MCF 10A (cell line): ENCODE measurements at regions of chr10 and their contacts with region 1.

Region 1: GRCh38 chr10:94630017-94630688 is 53.4 kb upstream of the CYP2C18 start:
- DNase-seq: peak; percentile 49
- H3K4me3 Mint-ChIP-seq: no peak overlapping the region
- H3K27ac Mint-ChIP-seq: no peak overlapping the region
- H3K4me1 Mint-ChIP-seq: no peaks in the 10 kb centered on the region
- H3K27me3 Mint-ChIP-seq: no peaks in the 10 kb centered on the region
- CTCF ChIP-seq: peak; percentile 51

Region 2: GRCh38 chr10:94963901-94964300 is 333.7 kb after region 1 on chr10:
- CTCF ChIA-PET with region 1: interaction called, 7 read pairs
- POLR2A ChIA-PET with region 1: no interaction called
- intact Hi-C with region 1: loop called (anchors 1 kb)
- DNase-seq: peak; percentile 51
- H3K4me3 Mint-ChIP-seq: no peak overlapping the region
- H3K27ac Mint-ChIP-seq: no peak overlapping the region
- H3K4me1 Mint-ChIP-seq: no peaks in the 10 kb centered on the region
- H3K27me3 Mint-ChIP-seq: no peaks in the 10 kb centered on the region
- CTCF ChIP-seq: peak; percentile 56

Region 3: GRCh38 chr10:95133016-95133752 is 503.0 kb after region 1 on chr10:
- CTCF ChIA-PET with region 1: no interaction called
- POLR2A ChIA-PET with region 1: no interaction called
- intact Hi-C with region 1: loop called (anchors 5 kb)
- DNase-seq: peak; percentile 88
- H3K4me3 Mint-ChIP-seq: no peak overlapping the region
- H3K27ac Mint-ChIP-seq: no peak overlapping the region
- H3K4me1 Mint-ChIP-seq: no peaks in the 10 kb centered on the region
- H3K27me3 Mint-ChIP-seq: peaks cover 15% of the 10 kb centered on the region
- CTCF ChIP-seq: peak; percentile 71

Region 4: DNA sequence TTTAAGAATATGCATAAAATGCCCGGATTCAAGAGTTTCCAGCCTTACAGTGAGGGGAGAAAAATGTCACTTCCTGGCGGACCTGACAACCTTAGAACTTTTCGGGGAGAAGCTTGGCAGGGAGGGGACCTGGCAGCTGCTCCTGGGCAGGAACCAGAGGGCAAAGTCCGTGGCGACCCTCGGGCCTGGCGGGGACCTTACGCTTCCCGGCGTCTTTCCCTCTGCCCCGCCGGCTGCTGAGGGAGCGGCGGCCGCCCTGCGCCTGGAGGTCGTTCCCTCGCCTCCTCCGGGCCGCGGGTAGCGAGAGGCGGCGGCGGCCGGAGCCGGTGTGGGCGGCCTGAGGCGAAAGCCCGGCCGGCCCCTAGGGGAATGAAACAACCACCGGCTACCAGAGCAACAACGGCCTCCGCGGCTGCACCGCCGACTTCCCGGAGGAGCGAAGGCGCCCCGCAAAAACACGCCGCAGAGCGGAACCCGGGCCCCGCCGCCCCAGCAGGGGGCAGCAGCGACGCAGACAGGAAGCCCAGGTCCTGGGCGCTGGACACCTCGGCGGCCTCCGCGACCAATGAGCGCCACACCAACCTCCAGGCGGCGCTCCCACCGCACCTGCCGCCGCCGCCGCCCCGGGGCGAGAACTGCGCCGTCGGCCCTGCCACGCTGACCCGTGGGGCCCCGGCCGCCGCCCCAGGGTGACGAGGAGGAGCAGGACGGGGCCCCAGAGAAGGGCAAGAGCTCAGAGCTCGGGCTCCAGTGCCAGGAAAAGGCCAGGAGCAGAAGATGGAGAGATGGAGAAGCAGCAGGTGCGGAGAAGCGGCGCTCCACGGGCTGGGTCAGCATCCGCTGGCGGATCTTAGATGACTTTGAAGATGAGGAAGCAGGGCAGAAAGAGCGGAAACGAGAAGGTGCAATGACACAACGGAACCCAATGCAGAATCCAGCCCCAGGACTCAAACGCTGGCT is 553.4 kb after region 1 on chr10:
- CTCF ChIA-PET with region 1: interaction called, 4 read pairs
- POLR2A ChIA-PET with region 1: no interaction called
- intact Hi-C with region 1: loop called (anchors 5 kb)
- DNase-seq: peak; percentile 80
- H3K4me3 Mint-ChIP-seq: peak overlapping the region; percentile 73
- H3K27ac Mint-ChIP-seq: no peak overlapping the region
- H3K4me1 Mint-ChIP-seq: peaks cover 6% of the 10 kb centered on the region
- H3K27me3 Mint-ChIP-seq: peaks cover 13% of the 10 kb centered on the region
- CTCF ChIP-seq: peak; percentile 96